ENCODE measurements at regions of chr2 and their contacts with region 1.

Region 1: DNA sequence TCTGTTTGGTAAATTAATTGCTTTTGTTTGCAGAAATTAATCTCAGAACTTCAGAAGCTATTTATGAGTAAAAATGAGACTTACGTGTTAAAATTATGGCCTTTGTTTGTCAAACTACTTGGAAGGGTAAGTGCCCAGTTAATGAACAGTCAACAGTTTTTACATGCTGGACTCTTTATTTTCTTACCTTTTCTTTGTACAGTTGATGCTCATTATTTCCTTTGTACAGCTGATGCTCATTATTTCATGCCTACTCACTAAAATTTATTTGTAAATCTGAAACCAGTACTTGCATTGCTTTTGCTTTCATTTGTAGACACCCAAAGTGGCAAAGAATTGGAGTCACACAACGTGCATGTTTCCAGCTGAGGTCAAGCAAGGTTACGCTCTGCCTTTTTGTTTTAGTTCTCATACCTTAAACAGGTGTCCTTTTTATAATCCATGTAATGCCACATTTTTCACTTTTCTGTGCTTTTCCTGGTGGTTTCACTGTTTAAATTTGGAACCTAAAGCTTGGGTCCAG is 13.3 kb downstream of the RIF1 start:
- H3K4me3 ChIP-seq: no peak overlapping the region
- H3K27ac ChIP-seq: no peak overlapping the region
- H3K4me1 ChIP-seq: no peaks in the 10 kb centered on the region
- CTCF ChIP-seq: no peak

Region 2: DNA sequence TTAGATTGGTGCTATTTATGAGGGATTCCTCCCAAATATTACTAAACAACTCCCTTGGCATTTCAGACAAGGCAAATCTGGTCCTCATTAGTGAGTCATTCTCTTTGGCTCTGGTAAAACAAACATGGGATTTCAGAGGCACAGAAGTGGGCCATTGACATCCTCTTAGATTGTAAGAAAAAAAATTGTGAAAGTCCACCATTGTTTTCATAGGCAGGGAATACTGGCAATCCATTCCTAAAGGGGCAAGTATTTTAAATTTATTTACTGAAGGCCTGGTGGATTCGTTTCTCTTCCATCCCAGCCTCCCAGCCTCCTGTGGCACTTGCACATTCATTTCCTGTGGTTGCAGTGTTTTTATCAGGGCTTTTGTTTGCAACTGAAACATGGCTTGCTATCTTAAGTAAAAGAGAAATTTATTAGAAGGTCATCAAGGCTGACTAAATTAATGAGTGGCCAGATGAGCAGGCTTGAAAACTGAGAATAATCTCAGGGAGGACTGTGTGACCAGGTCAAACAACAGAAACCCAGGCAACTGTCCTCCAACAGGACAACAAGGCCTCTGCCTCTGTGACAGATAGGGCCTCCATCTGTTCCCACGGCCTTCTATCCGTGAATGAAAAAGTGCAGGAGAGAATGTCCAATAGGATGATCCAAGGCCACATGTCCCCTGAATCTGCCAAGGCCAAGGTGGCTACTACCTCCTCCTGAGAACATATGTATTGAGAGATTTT is 88.7 kb before region 1 on chr2:
- CTCF ChIA-PET with region 1: no interaction called
- POLR2A ChIA-PET with region 1: no interaction called
- H3K4me3 ChIP-seq: no peak overlapping the region
- H3K27ac ChIP-seq: no peak overlapping the region
- H3K4me1 ChIP-seq: no peaks in the 10 kb centered on the region
- CTCF ChIP-seq: no peak

Region 3: DNA sequence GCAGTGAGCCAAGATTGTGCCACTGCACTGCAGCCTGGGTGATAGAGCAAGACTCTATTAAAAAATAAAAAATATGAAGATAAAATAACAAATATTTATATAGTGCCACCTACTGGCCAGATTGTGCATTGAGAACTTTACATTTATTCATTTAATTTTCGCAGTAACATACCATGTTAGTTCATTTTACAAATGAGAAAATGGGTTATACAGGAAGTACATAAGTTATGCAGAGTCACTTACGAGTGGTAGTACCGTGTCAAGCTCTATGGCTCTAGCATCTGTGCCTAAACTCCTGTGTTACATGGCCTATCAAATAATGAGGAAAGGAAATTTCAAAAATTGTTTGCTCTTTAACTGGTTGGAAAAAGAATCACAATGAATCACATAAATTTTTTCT is 14.7 kb after region 1 on chr2:
- CTCF ChIA-PET with region 1: interaction called, 10 read pairs
- POLR2A ChIA-PET with region 1: interaction called, 5 read pairs
- H3K4me3 ChIP-seq: no peak overlapping the region
- H3K27ac ChIP-seq: no peak overlapping the region
- H3K4me1 ChIP-seq: no peaks in the 10 kb centered on the region
- CTCF ChIP-seq: no peak

Measured in HEK293 (cell line).